GM12878 (cell line): ENCODE measurements at regions of chr9 and their contacts with region 1.

Region 1: GRCh38 chr9:135343837-135344522 is 135.6 kb upstream of the PPP1R26 start:
- DNase-seq: no peak
- ATAC-seq: peak; percentile 85
- H3K4me3 ChIP-seq: no peak overlapping the region
- H3K27ac ChIP-seq: no peak overlapping the region
- H3K4me1 ChIP-seq: no peaks in the 10 kb centered on the region
- H3K27me3 ChIP-seq: peaks cover 0 to 4% of the 10 kb centered on the region in 2 experiments; a peak in 2 of 4 replicates
- CTCF ChIP-seq: peak; percentile 66 to 91 (median 82)
- EP300 ChIP-seq: no peak
- POLR2A ChIP-seq: no peak
- RAD21 ChIP-seq: peak; percentile 65

Region 2: DNA sequence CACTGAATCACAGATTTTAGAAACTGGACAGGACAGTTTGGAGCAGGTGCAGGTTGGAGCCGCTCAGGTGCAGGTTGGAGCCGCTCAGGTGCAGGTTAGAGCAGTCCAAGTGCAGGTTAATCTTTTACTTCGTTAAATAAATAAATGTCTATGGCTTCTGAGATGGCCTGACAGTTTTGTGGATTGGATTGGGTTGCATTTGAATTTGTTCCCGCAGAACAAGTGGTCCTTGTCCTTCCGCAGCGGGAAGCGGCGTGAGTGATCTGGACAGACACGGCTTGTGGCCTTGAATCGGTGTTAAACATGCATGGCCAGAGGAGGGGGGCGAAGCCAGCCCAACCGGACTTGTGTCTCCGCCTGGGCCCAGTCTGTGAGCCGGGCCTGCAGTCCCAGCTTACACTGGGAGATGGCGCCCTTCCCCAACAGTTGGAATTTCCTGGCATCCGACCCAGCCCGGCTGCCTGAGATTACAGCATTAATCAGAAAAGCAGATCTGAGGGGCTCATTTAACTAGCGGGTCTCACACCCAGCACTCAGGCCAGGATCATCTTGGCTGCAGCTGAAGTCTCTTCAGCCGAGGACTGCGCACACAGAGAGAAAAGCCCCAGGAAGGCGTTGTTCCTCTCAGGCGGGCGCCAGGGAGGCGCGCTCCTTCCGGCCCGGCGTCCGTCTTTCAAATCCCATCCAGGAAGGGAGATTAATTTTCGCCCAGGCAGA is 258.0 kb before region 1 on chr9:
- CTCF ChIA-PET with region 1: no interaction called
- POLR2A ChIA-PET with region 1: no interaction called
- RAD21 ChIA-PET with region 1: no interaction called
- SMC1A ChIA-PET with region 1: no interaction called
- in situ Hi-C with region 1: loop called (anchors 5 kb)
- intact Hi-C with region 1: no loop called
- DNase-seq: no peak
- ATAC-seq: peak; percentile 71
- H3K4me3 ChIP-seq: no peak overlapping the region
- H3K27ac ChIP-seq: no peak overlapping the region
- H3K4me1 ChIP-seq: no peaks in the 10 kb centered on the region
- H3K27me3 ChIP-seq: peaks cover 3 to 4% of the 10 kb centered on the region in 2 experiments
- CTCF ChIP-seq: peak; percentile 70 to 81 (median 78)
- EP300 ChIP-seq: no peak
- POLR2A ChIP-seq: no peak
- RAD21 ChIP-seq: peak; percentile 77

Region 3: GRCh38 chr9:135355521-135356011 is 11.6 kb after region 1 on chr9:
- CTCF ChIA-PET with region 1: no interaction called
- POLR2A ChIA-PET with region 1: no interaction called
- RAD21 ChIA-PET with region 1: no interaction called
- SMC1A ChIA-PET with region 1: no interaction called
- in situ Hi-C with region 1: no loop called
- intact Hi-C with region 1: no loop called
- DNase-seq: no peak
- ATAC-seq: no peak
- H3K4me3 ChIP-seq: no peak overlapping the region
- H3K27ac ChIP-seq: no peak overlapping the region
- H3K4me1 ChIP-seq: no peaks in the 10 kb centered on the region
- H3K27me3 ChIP-seq: peaks cover 0 to 3% of the 10 kb centered on the region in 2 experiments; a peak in 2 of 4 replicates
- CTCF ChIP-seq: no peak
- EP300 ChIP-seq: no peak
- POLR2A ChIP-seq: no peak
- RAD21 ChIP-seq: no peak